Activated T-helper 1 cell treated with anti-CD3 and anti-CD28 coated beads, Interleukin-12 subunit alpha, Interleukin-12 subunit beta, Interleukin-2, Interleukin-4 antibody, amounts not matched to agents 30 ng/mL and 10 ng/mL and 1 ng/mL, durations not matched to agents 14 hours and 24 hours and 36 hours (primary cell): ENCODE measurements at regions of chr2 and their contacts with region 1.

Region 1: DNA sequence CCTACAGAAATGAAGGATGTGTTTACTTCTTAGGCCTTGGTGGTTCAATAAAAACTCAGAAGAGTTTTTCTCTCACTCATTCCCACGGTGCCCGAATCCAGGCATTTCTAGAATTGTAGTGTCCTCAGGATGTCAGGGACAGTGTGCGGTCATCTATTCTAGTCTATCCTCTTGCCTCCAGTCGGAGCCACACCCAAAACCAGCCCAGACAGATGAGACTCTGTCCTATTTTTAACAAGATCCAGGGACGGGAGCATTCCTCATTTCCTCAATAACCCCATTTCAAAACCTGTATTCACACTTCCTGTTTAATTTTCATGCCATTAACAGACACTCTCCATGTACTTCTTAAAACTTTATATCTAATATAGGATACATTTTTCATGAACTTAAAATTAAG is 11.6 kb upstream of the RBMS1 start:
- DNase-seq: no peak
- H3K4me3 Mint-ChIP-seq: no peak overlapping the region
- H3K27ac Mint-ChIP-seq: no peak overlapping the region
- H3K4me1 Mint-ChIP-seq: peaks cover 29% of the 10 kb centered on the region
- H3K27me3 Mint-ChIP-seq: peaks cover 3% of the 10 kb centered on the region

Region 2: DNA sequence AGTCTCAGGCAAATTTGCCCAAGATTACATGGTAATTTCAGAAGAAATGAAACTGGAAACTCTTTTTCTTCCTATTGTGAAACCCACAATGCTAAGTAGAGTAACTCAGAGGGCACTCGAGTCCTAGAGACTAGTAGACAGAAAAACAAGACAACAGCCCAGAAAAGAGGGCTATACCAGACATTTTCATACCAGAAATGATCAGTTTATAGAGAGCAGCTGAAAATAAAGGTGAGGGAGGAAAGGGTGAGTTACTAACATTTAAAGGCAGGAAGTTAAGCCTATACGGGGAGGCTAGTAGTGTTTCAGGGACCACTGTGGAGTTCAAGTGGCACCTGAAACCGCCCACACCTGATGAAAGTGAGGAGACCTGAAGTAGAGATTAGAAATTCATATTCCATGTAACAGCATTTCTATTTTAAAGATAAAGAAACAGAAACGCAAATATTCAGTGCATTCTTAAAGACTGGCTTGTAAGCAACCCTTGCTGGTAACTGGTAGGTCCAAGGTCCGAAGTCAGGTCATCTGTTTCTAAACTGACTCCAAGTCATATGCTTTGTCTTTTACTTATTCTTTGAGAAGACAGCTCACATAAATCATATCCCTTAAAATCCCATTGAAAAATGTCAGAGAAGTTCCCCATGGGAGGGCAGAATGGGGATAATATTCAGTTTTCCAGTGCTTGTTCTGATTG is 160.0 kb before region 1 on chr2:
- intact Hi-C with region 1: loop called (anchors 5 kb)
- DNase-seq: no peak
- H3K4me3 Mint-ChIP-seq: peak overlapping the region; percentile 23
- H3K27ac Mint-ChIP-seq: peak overlapping the region; percentile 67
- H3K4me1 Mint-ChIP-seq: peaks cover 21% of the 10 kb centered on the region
- H3K27me3 Mint-ChIP-seq: peaks cover 1% of the 10 kb centered on the region

Region 3: GRCh38 chr2:160472839-160473251 is 32.4 kb before region 1 on chr2:
- intact Hi-C with region 1: loop called (anchors 1 kb)
- DNase-seq: no peak
- H3K4me3 Mint-ChIP-seq: peak overlapping the region; percentile 49
- H3K27ac Mint-ChIP-seq: peak overlapping the region; percentile 59
- H3K4me1 Mint-ChIP-seq: peaks cover 67% of the 10 kb centered on the region
- H3K27me3 Mint-ChIP-seq: no peaks in the 10 kb centered on the region

Region 4: GRCh38 chr2:160516547-160517365 is 11.5 kb after region 1 on chr2:
- intact Hi-C with region 1: loop called (anchors 1 kb)
- DNase-seq: no peak
- H3K4me3 Mint-ChIP-seq: peak overlapping the region; percentile 31
- H3K27ac Mint-ChIP-seq: peak overlapping the region; percentile 84
- H3K4me1 Mint-ChIP-seq: peaks cover 42% of the 10 kb centered on the region
- H3K27me3 Mint-ChIP-seq: peaks cover 2% of the 10 kb centered on the region

Region 5: GRCh38 chr2:160590664-160591063 is 85.4 kb after region 1 on chr2:
- intact Hi-C with region 1: loop called (anchors 1 kb)
- DNase-seq: no peak
- H3K4me3 Mint-ChIP-seq: no peak overlapping the region
- H3K27ac Mint-ChIP-seq: peak overlapping the region; percentile 53
- H3K4me1 Mint-ChIP-seq: peaks cover 4% of the 10 kb centered on the region
- H3K27me3 Mint-ChIP-seq: no peaks in the 10 kb centered on the region